Heart left ventricle (tissue), 16 donors: ENCODE measurements at regions of chr5 and their contacts with region 1.

Region 1: DNA sequence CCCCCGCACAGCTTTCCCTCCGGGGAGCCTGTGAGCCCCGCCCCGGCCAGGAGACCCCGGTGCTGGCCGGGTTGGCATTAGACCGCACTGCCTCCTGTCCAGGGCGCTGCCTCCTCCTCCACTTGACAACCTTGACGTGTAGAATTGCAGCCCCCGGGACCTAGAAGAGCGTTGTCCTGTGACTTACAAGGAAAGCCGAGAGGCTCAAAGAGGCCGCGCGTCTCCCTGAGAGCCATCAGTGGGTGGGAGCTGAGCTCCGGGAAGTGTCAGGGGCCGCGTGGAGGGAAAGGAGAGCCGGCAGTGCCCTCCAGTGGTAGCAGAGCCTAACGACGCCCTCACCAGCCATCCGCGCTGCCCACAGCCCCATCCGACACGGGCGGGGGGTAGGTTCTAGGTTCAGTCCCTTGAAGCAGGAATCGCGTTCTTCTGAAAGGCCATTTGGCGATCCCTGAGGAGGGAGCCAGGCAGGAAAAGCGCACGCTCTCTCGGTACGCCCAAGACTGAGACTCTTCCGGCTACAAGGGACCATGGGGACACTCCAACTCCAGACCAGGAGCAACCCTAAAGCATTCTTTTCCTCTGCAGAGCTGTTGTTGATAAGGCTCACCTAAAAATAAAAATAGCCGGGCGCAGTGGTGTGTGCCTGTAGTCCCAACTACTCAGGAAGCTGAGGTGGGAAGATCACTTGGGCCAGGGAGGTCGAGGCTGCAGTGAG is 40.6 kb upstream of the SAP30L start:
- DNase-seq: peak; percentile 81 to 89 (median 82)
- ATAC-seq: peak; percentile 88 to 99 (median 97)
- H3K4me3 ChIP-seq: peak overlapping the region in 11 of 12 donors; percentile 3 to 62 (median 45)
- H3K27ac ChIP-seq: peak overlapping the region in 1 of 12 donors; percentile 60
- H3K4me1 ChIP-seq: peaks cover 0 to 13% (median 8%) of the 10 kb centered on the region in 12 donors
- H3K27me3 ChIP-seq: no peaks in the 10 kb centered on the region
- CTCF ChIP-seq: peak; percentile 76 to 96 (median 92)
- POLR2A ChIP-seq: no peak

Region 2: DNA sequence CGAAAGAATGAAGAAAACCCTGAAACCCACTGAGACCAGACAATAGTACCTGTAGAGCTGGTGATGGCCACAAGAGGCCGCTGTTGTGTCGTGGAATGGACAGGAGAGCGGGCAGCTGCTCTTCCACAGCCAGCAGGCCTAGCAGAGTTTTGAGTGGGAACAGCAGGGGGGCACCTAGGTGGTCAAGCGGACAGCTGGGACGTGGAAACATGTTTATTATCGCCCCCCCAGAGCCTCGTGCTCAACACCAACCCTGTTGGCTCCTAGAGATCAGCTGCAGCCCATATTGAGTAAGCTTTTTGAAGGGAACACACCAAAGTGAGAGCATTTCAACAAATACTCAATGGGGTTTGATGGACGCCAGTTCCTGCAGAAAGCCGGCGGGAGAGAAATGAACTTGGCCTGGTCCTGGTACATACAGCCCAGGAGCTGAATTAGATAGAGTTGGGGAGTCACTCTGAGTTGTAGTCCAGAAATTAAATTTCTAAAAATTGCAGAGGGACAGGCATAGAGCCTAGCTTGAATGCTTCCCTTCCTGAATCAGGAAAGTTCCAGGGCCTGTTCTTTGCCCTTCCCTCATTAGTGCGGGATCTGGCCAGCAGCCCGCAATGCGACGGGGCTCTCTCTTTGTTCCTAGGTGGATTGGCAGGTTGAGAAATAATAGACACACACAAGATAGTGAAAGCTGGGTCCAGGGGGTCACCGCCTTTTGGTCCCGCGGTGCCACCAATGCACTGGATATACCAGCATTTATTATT is 332.6 kb before region 1 on chr5:
- intact Hi-C with region 1: loop called (anchors 1 to 5 kb)
- DNase-seq: peak; percentile 72 to 91 (median 83)
- ATAC-seq: peak; percentile 78 to 94 (median 90)
- H3K4me3 ChIP-seq: no peak overlapping the region
- H3K27ac ChIP-seq: peak overlapping the region in 2 of 12 donors; percentile 1 to 27
- H3K4me1 ChIP-seq: peaks cover 0 to 27% (median 11%) of the 10 kb centered on the region in 12 donors
- H3K27me3 ChIP-seq: no peaks in the 10 kb centered on the region
- CTCF ChIP-seq: peak; percentile 88 to 98 (median 95)
- POLR2A ChIP-seq: no peak

Region 3: GRCh38 chr5:154179846-154180710 is 225.2 kb before region 1 on chr5:
- intact Hi-C with region 1: loop called in 5 of 10 experiments (anchors 2 to 5 kb)
- DNase-seq: peak in 1 of 5 donors; percentile 41
- ATAC-seq: peak in 3 of 4 donors; percentile 84 to 88 (median 88)
- H3K4me3 ChIP-seq: no peak overlapping the region
- H3K27ac ChIP-seq: no peak overlapping the region
- H3K4me1 ChIP-seq: peaks cover 0 to 12% (median 0%) of the 10 kb centered on the region in 12 donors
- H3K27me3 ChIP-seq: no peaks in the 10 kb centered on the region
- CTCF ChIP-seq: peak; percentile 68 to 87 (median 76)
- POLR2A ChIP-seq: no peak

Region 4: DNA sequence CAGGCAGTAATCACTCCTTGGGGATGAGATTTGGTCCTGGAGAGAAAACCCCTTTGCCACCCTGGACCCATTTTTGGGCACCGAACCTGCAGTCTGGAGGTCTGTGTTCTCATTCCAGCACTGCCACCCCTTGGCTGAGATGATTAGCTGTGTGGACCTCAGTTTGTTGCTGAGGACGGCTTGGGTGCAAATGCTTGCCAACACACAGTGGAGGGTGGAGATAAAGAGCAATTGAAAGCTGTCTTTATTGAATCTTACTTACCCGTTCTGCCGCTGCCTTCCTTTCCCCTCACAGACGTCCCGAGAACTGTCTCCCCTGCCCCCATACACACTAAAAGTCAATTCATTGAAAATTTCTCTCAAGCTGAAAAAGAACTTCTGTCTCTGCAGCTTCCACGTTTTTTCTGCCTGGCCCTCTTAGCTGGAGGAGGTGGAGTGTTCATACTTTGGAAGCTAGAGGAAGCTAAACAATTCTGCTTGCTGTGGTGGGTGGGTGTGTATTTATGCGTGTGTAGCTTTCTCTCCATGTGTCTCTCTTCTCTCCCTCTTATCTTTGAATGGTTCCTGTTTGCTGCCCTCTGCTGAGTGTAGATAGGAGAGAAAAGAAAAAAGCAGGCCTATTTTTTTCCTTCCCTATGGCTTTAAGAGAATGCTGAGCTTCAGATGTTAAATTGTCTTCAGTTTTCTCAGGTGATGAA is 208.1 kb before region 1 on chr5:
- intact Hi-C with region 1: loop called in 3 of 10 experiments (anchors 5 kb)
- DNase-seq: no peak
- ATAC-seq: peak; percentile 39 to 68 (median 52)
- H3K4me3 ChIP-seq: no peak overlapping the region
- H3K27ac ChIP-seq: peak overlapping the region in 1 of 12 donors; percentile 32
- H3K4me1 ChIP-seq: peaks cover 0 to 54% (median 22%) of the 10 kb centered on the region in 12 donors
- H3K27me3 ChIP-seq: no peaks in the 10 kb centered on the region
- CTCF ChIP-seq: peak in 11 of 12 donors; percentile 7 to 52 (median 36)
- POLR2A ChIP-seq: no peak

Region 5: DNA sequence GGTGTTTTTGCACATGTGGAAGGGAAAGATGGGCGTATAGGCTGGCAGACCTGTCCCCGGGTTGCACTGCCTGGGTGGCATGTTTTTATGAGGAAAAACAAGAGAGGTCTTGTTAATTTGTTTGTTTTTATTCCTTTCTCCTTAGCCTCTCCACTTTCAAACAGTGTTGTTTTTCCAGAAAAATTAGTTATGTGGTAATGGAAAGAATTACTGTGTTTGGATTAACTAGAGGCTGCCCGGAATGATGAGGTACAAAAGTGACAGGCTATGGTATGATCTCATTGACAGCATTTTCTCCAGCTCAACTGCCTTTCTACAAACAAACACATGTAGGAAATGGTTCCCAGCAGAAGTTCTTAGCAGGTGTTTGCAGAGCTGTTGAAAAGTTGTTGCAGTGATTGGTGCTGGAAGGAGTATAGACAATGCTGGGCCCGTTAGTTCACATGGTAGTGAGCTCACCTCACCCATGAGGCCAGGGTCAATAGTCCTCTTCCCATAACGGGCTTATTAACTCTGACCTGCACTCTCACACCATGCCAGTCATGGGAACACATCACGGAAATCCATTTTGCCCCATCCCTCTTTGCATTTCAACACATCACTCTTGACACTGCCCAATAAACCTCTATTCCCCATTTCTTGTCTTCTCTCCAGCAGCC is 70.7 kb before region 1 on chr5:
- intact Hi-C with region 1: loop called in 1 of 10 experiments (anchors 10 kb)
- DNase-seq: no peak
- ATAC-seq: peak; percentile 31 to 80 (median 46)
- H3K4me3 ChIP-seq: no peak overlapping the region
- H3K27ac ChIP-seq: peak overlapping the region in 5 of 12 donors; percentile 35 to 72 (median 48)
- H3K4me1 ChIP-seq: peaks cover 0 to 6% (median 0%) of the 10 kb centered on the region in 12 donors
- H3K27me3 ChIP-seq: no peaks in the 10 kb centered on the region
- CTCF ChIP-seq: no peak
- POLR2A ChIP-seq: no peak

Region 6: DNA sequence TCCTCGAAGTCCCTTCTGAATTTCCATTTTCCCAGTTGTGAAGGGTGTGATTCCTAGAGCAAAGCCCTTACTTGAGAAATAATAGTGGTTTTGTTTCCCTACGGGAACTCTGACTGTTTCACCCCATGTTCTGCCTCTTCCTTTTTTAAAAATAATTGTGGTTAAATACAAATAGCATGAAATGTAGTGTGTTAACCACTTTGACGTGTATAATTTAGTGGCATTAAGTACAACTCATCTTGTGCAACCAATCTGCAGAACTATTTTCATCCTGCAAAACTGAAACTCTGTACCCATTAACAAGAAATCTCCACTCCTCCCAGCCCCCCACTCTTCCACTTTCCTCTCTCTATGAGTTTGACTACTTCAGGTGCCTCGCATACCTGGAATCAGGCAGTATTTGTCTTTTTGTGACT is 108.4 kb after region 1 on chr5:
- intact Hi-C with region 1: no loop called
- DNase-seq: no peak
- ATAC-seq: no peak
- H3K4me3 ChIP-seq: no peak overlapping the region
- H3K27ac ChIP-seq: no peak overlapping the region
- H3K4me1 ChIP-seq: no peaks in the 10 kb centered on the region
- H3K27me3 ChIP-seq: peaks cover 0 to 31% (median 3%) of the 10 kb centered on the region in 9 donors
- CTCF ChIP-seq: no peak
- POLR2A ChIP-seq: no peak